Activated naive CD4-positive, alpha-beta T cell treated with anti-CD3 and anti-CD28 coated beads for 36 hours (primary cell): ENCODE measurements at regions of chr1 and their contacts with region 1.

Region 1: DNA sequence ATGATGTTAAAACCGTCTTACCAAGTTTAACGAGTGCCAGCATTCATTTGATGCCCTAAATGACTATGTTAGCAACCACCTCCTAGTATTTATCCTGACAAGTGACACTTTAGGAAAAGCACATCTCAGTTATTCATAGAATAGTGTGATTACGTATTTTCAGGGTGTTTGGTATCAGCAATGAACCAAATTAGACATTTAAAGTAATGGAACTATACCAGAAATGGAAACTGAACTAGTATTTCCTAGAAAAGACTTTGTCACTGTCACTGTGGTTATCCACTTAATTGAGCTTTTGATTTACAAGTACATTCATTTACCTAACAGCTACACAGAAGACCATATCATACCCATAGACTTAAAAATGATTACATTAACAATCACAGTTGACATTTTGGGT is 3.6 kb upstream of the IL12RB2 start:
- DNase-seq: no peak
- H3K4me3 Mint-ChIP-seq: no peak overlapping the region
- H3K27ac Mint-ChIP-seq: peak overlapping the region; percentile 86
- H3K4me1 Mint-ChIP-seq: peaks cover 23% of the 10 kb centered on the region
- H3K27me3 Mint-ChIP-seq: no peaks in the 10 kb centered on the region

Region 2: DNA sequence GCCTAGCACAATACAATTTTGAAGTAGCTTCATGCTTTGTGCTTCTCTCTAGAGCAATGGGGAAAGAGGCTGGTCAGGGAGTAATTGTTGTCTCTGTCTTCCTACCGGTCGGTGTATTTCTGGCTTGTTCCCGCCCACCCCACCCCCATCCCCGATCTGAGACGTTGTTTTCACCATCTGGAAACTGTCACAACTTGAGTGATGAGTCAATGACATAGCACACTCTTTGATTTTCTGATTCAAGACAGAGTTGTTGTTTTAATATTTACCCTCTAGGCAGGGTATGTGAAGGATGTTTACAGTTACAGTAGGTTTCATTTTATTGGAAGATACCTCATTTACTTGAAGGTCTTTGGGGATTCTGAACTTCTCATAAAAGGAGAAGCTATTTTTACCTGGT is 10.7 kb after region 1 on chr1:
- CTCF ChIA-PET with region 1: interaction called, 3 read pairs
- intact Hi-C with region 1: loop called (anchors 1 kb)
- DNase-seq: peak; percentile 56
- H3K4me3 Mint-ChIP-seq: peak overlapping the region; percentile 47
- H3K27ac Mint-ChIP-seq: peak overlapping the region; percentile 95
- H3K4me1 Mint-ChIP-seq: peaks cover 46% of the 10 kb centered on the region
- H3K27me3 Mint-ChIP-seq: no peaks in the 10 kb centered on the region

Region 3: GRCh38 chr1:67376381-67376780 is 72.4 kb after region 1 on chr1:
- CTCF ChIA-PET with region 1: no interaction called
- intact Hi-C with region 1: no loop called
- DNase-seq: no peak
- H3K4me3 Mint-ChIP-seq: no peak overlapping the region
- H3K27ac Mint-ChIP-seq: no peak overlapping the region
- H3K4me1 Mint-ChIP-seq: peaks cover 1% of the 10 kb centered on the region
- H3K27me3 Mint-ChIP-seq: no peaks in the 10 kb centered on the region